ENCODE measurements at regions of chr13 and their contacts with region 1.

Region 1: GRCh38 chr13:99436686-99437416 is 64.4 kb upstream of the TM9SF2 start:
- DNase-seq: peak; percentile 79 to 94 (median 88)

Region 2: GRCh38 chr13:99269627-99270241 is 167.1 kb before region 1 on chr13:
- intact Hi-C with region 1: loop called (anchors 5 kb)
- DNase-seq: peak in 12 of 42 donors; percentile 20 to 69 (median 36)

Region 3: DNA sequence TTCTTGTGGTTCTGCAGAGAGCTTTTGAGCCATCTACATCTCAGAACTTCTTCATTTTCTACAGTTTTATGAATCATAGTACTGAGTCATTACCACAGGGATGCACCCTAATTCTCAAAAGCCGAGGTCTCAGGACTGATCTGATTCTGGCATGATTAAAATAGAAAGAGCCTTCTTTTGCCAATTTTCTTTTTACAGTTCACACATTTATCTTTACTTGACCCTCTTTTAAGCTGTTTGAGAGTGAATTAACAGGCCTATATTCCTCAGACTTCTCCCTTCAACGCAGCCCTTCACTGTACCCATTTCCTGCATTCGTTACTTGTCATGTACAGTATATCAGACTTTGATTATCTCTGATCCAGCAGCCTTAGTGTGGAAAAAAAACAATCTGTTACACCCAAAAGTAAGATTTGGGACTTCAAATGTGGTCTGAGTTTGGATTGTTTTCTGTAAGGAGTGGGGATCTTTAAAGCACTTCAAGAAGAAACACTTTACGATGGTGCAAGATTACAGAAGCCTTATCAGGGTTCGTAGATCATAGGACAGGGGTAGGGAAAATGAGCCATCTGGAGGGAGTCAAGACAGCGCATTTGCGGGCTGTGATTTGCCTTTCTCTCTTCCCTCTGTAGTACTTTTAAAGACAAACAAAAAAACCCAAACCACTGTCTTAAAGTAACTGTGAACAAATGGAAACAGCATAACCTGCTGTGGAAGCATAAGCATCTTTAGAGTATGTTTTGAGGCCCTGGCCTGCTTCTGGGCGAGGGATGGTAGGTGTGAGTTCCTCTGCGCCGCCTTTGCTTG is 114.4 kb before region 1 on chr13:
- intact Hi-C with region 1: no loop called
- DNase-seq: peak in 2 of 42 donors; percentile 47 to 53

Region 4: GRCh38 chr13:99421758-99422585 is 14.9 kb before region 1 on chr13:
- intact Hi-C with region 1: no loop called
- DNase-seq: peak in 4 of 42 donors; percentile 6 to 37 (median 22)